ENCODE measurements at regions of chr1 and their contacts with region 1.

Region 1: GRCh38 chr1:205711104-205712020 is 31.1 kb upstream of the SLC45A3 start:
- DNase-seq: peak; percentile 61 to 70
- H3K4me3 ChIP-seq: no peak overlapping the region
- H3K4me3 Mint-ChIP-seq: no peak overlapping the region
- H3K27ac Mint-ChIP-seq: no peak overlapping the region
- H3K4me1 ChIP-seq: peaks cover 10% of the 10 kb centered on the region
- H3K4me1 Mint-ChIP-seq: peaks cover 5% of the 10 kb centered on the region
- H3K27me3 ChIP-seq: no peaks in the 10 kb centered on the region
- H3K27me3 Mint-ChIP-seq: no peaks in the 10 kb centered on the region
- CTCF ChIP-seq: peak; percentile 85 to 87

Region 2: GRCh38 chr1:205444931-205445645 is 266.3 kb before region 1 on chr1:
- CTCF ChIA-PET with region 1: no interaction called
- POLR2A ChIA-PET with region 1: interaction called, 10 read pairs
- intact Hi-C with region 1: no loop called
- DNase-seq: no peak
- H3K4me3 ChIP-seq: no peak overlapping the region
- H3K4me3 Mint-ChIP-seq: no peak overlapping the region
- H3K27ac Mint-ChIP-seq: no peak overlapping the region
- H3K4me1 ChIP-seq: peaks cover 19% of the 10 kb centered on the region
- H3K4me1 Mint-ChIP-seq: peaks cover 12% of the 10 kb centered on the region
- H3K27me3 ChIP-seq: no peaks in the 10 kb centered on the region
- H3K27me3 Mint-ChIP-seq: no peaks in the 10 kb centered on the region
- CTCF ChIP-seq: no peak

Region 3: DNA sequence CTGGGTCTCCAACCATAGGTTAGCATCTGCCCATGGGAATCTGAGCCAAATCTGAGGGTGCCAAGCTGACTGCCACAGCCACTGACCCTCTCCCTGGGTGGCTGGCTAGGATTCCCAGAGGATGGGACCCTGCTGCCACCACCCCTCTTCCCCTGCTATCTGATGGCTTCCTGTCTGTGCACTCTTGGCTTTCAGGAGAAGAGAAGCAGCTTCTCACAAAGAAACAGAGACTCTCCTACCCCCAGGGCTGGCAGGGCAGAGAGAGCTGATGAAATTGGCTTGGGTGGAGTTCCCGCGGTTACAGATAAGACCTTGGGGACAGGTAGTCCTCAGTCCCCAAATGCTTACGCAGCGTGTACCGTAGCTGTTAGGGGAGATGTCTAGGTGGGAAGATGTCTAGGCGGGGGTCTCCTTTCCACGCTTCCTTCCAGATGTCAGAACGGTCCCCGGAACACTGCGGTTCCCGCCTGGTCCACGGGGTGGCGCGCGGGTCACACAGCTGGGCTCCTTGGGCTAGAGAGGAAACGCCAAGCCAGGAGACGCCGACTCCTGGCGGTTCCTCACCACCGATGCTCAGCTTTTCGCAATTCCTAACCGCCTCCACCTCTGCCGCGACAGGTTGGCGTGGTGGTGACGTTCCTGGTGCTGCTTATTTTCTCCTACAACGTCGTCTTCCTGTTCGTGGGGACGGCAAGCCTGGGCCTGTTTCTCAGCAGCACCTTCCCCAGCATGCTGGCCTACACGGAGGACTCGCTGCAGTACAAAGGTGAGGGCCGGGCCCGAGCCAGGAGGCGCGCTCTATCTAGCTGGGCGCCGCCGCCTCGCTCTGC is 119.6 kb before region 1 on chr1:
- CTCF ChIA-PET with region 1: interaction called, 10 read pairs
- POLR2A ChIA-PET with region 1: no interaction called
- intact Hi-C with region 1: loop called (anchors 1 kb)
- DNase-seq: peak; percentile 87 to 93
- H3K4me3 ChIP-seq: peak overlapping the region; percentile 38
- H3K4me3 Mint-ChIP-seq: peak overlapping the region; percentile 73
- H3K27ac Mint-ChIP-seq: no peak overlapping the region
- H3K4me1 ChIP-seq: no peaks in the 10 kb centered on the region
- H3K4me1 Mint-ChIP-seq: no peaks in the 10 kb centered on the region
- H3K27me3 ChIP-seq: no peaks in the 10 kb centered on the region
- H3K27me3 Mint-ChIP-seq: no peaks in the 10 kb centered on the region
- CTCF ChIP-seq: peak; percentile 97 to 98

Region 4: GRCh38 chr1:205668951-205669340 is 42.4 kb before region 1 on chr1:
- CTCF ChIA-PET with region 1: interaction called, 4 read pairs
- POLR2A ChIA-PET with region 1: no interaction called
- intact Hi-C with region 1: loop called (anchors 1 kb)
- DNase-seq: peak in 1 of 2 experiments; percentile 35
- H3K4me3 ChIP-seq: no peak overlapping the region
- H3K4me3 Mint-ChIP-seq: no peak overlapping the region
- H3K27ac Mint-ChIP-seq: no peak overlapping the region
- H3K4me1 ChIP-seq: peaks cover 50% of the 10 kb centered on the region
- H3K4me1 Mint-ChIP-seq: peaks cover 32% of the 10 kb centered on the region
- H3K27me3 ChIP-seq: no peaks in the 10 kb centered on the region
- H3K27me3 Mint-ChIP-seq: no peaks in the 10 kb centered on the region
- CTCF ChIP-seq: no peak

Measured in Caco-2 (cell line).